GM12878 (cell line): ENCODE measurements at regions of chr10 and their contacts with region 1.

Region 1: GRCh38 chr10:110497438-110498086 is at the start of gene DUSP5:
- DNase-seq: peak; percentile 75
- ATAC-seq: peak; percentile 51
- H3K4me3 ChIP-seq: peak within 1 kb of the TSS; percentile 95
- H3K27ac ChIP-seq: peak within 1 kb of the TSS; percentile 91
- H3K4me1 ChIP-seq: peaks cover 26% of the 10 kb centered on the region
- H3K27me3 ChIP-seq: no peaks in the 10 kb centered on the region
- CTCF ChIP-seq: no peak
- EP300 ChIP-seq: peak in 1 of 2 experiments; percentile 13; a peak in 2 of 4 replicates
- POLR2A ChIP-seq: peak; percentile 90
- RAD21 ChIP-seq: no peak
- polyA plus RNA-seq, gene DUSP5: 7.5 to 14.6 TPM

Region 2: DNA sequence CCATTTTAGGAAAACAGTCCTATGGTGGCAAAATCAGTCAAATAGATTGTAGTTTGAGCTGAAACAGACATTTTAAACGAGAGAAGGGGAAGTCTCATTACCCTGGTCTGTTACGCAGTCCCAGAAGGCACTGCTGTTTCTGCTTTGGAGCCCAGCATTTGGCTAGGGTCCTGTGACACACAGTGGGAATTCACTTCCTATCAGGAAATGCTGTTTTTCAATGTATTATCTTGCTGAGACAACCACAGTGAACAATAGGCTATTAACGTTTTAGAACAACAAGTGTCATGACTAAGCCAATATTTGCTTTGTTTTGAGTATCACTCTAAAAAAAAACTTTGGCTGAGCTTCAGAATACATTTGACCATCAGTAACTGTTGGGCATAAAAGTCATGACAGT is 415.7 kb before region 1 on chr10:
- CTCF ChIA-PET with region 1: no interaction called
- POLR2A ChIA-PET with region 1: no interaction called
- RAD21 ChIA-PET with region 1: no interaction called
- SMC1A ChIA-PET with region 1: no interaction called
- in situ Hi-C with region 1: no loop called
- intact Hi-C with region 1: loop called (anchors 10 kb)
- DNase-seq: no peak
- ATAC-seq: peak; percentile 11
- H3K4me3 ChIP-seq: no peak overlapping the region
- H3K27ac ChIP-seq: peak overlapping the region; percentile 57; the same call in 1 of the 2 replicates
- H3K4me1 ChIP-seq: peaks cover 22% of the 10 kb centered on the region
- H3K27me3 ChIP-seq: no peaks in the 10 kb centered on the region
- CTCF ChIP-seq: no peak
- EP300 ChIP-seq: no peak
- POLR2A ChIP-seq: no peak
- RAD21 ChIP-seq: no peak

Region 3: GRCh38 chr10:110326351-110327032 is 171.1 kb before region 1 on chr10:
- CTCF ChIA-PET with region 1: interaction called, 7 read pairs
- POLR2A ChIA-PET with region 1: interaction called, 14 read pairs
- RAD21 ChIA-PET with region 1: interaction called, 13 read pairs
- SMC1A ChIA-PET with region 1: interaction called, 73 read pairs
- in situ Hi-C with region 1: no loop called
- intact Hi-C with region 1: no loop called
- DNase-seq: peak; percentile 51
- ATAC-seq: peak; percentile 49
- H3K4me3 ChIP-seq: no peak overlapping the region
- H3K27ac ChIP-seq: peak overlapping the region; percentile 79
- H3K4me1 ChIP-seq: peaks cover 39% of the 10 kb centered on the region
- H3K27me3 ChIP-seq: no peaks in the 10 kb centered on the region
- CTCF ChIP-seq: no peak
- EP300 ChIP-seq: peak in 1 of 2 experiments; percentile 60; a peak in 1 of 4 replicates
- POLR2A ChIP-seq: no peak
- RAD21 ChIP-seq: no peak

Region 4: GRCh38 chr10:110395725-110396651 is 101.6 kb before region 1 on chr10:
- CTCF ChIA-PET with region 1: interaction called, 3 read pairs
- POLR2A ChIA-PET with region 1: interaction called, 5 read pairs
- RAD21 ChIA-PET with region 1: interaction called, 16 read pairs
- SMC1A ChIA-PET with region 1: interaction called, 9 read pairs
- in situ Hi-C with region 1: no loop called
- intact Hi-C with region 1: no loop called
- DNase-seq: peak; percentile 91
- ATAC-seq: peak; percentile 92
- H3K4me3 ChIP-seq: no peak overlapping the region
- H3K27ac ChIP-seq: peak overlapping the region; percentile 69
- H3K4me1 ChIP-seq: peaks cover 16% of the 10 kb centered on the region
- H3K27me3 ChIP-seq: no peaks in the 10 kb centered on the region
- CTCF ChIP-seq: no peak
- EP300 ChIP-seq: peak; percentile 99 to 100
- POLR2A ChIP-seq: no peak
- RAD21 ChIP-seq: peak; percentile 24; the same call in 1 of the 2 replicates

Region 5: DNA sequence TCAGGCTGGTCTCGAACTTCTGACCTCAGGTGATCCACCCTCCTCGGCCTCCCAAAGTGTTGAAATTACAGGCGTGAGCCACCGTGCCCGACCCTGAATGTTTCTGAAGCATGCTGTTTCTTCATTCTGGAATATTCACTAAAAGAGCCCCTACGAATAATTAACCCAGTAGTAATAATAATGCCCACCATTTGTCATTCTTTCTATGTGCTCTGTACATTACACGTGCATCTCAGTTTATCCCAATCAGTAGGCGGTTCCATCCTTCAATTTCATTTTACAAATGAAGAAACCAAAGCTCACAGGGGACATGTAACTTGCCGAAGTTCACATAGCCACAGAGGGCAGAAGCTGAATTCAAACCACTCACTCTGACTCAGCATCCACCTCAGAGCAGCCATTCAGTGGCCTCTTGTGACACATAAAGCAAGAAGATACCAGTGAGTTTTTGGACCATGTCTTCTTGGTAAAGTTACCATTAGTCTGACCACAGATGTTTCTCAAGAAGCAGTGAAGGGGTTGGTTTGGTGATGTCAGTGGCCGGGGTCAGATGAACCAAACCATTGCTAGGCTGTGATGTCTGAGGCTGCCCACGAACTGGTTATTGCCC is 71.8 kb before region 1 on chr10:
- CTCF ChIA-PET with region 1: interaction called, 4 read pairs
- POLR2A ChIA-PET with region 1: interaction called, 3 read pairs
- RAD21 ChIA-PET with region 1: interaction called, 11 read pairs
- SMC1A ChIA-PET with region 1: interaction called, 13 read pairs
- in situ Hi-C with region 1: no loop called
- intact Hi-C with region 1: loop called (anchors 2 kb)
- DNase-seq: peak; percentile 89
- ATAC-seq: peak; percentile 86
- H3K4me3 ChIP-seq: no peak overlapping the region
- H3K27ac ChIP-seq: peak overlapping the region; percentile 60
- H3K4me1 ChIP-seq: peaks cover 65% of the 10 kb centered on the region
- H3K27me3 ChIP-seq: no peaks in the 10 kb centered on the region
- CTCF ChIP-seq: no peak
- EP300 ChIP-seq: peak; percentile 56 to 63; a peak in 1 of 4 replicates
- POLR2A ChIP-seq: no peak
- RAD21 ChIP-seq: peak; percentile 34; the same call in 1 of the 2 replicates

Region 6: DNA sequence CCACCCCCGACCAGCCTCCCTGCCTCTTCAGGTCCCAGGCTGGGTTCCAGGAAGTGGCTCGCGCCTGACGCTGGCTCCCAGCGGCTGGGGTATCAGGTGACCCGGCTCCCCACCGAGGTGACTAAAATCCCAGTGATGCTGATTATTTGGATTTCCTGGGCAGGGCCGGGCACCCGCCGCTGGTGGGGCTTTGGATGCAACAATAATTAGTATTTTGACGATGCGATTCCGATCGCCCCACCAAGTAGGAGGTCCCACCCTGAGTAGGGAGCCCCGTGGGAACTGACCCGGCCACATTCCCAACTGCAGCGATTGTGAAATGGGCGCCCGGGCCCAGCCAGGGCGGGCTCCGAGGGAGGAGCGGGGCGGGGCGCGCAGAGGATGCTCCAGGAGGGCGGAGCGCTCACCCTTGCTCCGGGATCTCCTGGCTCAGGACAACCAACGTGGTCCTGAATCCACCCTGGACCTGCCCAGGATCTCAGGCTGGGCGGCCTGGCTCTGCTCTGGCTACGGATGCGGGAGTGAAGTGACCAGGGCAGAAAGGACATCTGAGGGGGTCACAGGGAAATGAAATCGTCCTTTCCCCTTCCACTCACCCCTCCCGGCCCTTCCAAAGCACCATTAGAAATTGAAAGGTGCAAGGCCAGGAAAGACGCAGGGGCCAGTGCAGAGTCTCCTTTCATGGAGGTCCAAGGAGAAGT is 32.7 kb after region 1 on chr10:
- CTCF ChIA-PET with region 1: interaction called, 10 read pairs
- POLR2A ChIA-PET with region 1: interaction called, 23 read pairs
- RAD21 ChIA-PET with region 1: interaction called, 34 read pairs
- SMC1A ChIA-PET with region 1: interaction called, 44 read pairs
- in situ Hi-C with region 1: no loop called
- intact Hi-C with region 1: no loop called
- DNase-seq: no peak
- ATAC-seq: peak; percentile 35
- H3K4me3 ChIP-seq: peak overlapping the region; percentile 30; the same call in 1 of the 2 replicates
- H3K27ac ChIP-seq: 0 out of 2 replicates have a peak overlapping the region, but pooled peaks have one; percentile 18
- H3K4me1 ChIP-seq: peaks cover 36% of the 10 kb centered on the region
- H3K27me3 ChIP-seq: no peaks in the 10 kb centered on the region
- CTCF ChIP-seq: no peak
- EP300 ChIP-seq: no peak
- POLR2A ChIP-seq: no peak
- RAD21 ChIP-seq: no peak

Region 7: GRCh38 chr10:110774069-110775019 is 276.8 kb after region 1 on chr10:
- CTCF ChIA-PET with region 1: no interaction called
- POLR2A ChIA-PET with region 1: no interaction called
- RAD21 ChIA-PET with region 1: no interaction called
- SMC1A ChIA-PET with region 1: no interaction called
- in situ Hi-C with region 1: no loop called
- intact Hi-C with region 1: loop called (anchors 5 kb)
- DNase-seq: peak; percentile 99
- ATAC-seq: peak; percentile 94
- H3K4me3 ChIP-seq: no peak overlapping the region
- H3K27ac ChIP-seq: peak overlapping the region; percentile 85
- H3K4me1 ChIP-seq: peaks cover 22% of the 10 kb centered on the region
- H3K27me3 ChIP-seq: no peaks in the 10 kb centered on the region
- CTCF ChIP-seq: no peak
- EP300 ChIP-seq: peak; percentile 100
- POLR2A ChIP-seq: peak; percentile 38; the same call in 1 of the 2 replicates
- RAD21 ChIP-seq: no peak

Region 8: GRCh38 chr10:111186358-111186757 is 688.8 kb after region 1 on chr10:
- CTCF ChIA-PET with region 1: no interaction called
- POLR2A ChIA-PET with region 1: no interaction called
- RAD21 ChIA-PET with region 1: no interaction called
- SMC1A ChIA-PET with region 1: no interaction called
- in situ Hi-C with region 1: no loop called
- intact Hi-C with region 1: no loop called
- DNase-seq: no peak
- ATAC-seq: no peak
- H3K4me3 ChIP-seq: no peak overlapping the region
- H3K27ac ChIP-seq: no peak overlapping the region
- H3K4me1 ChIP-seq: no peaks in the 10 kb centered on the region
- H3K27me3 ChIP-seq: no peaks in the 10 kb centered on the region
- CTCF ChIP-seq: no peak
- EP300 ChIP-seq: no peak
- POLR2A ChIP-seq: no peak
- RAD21 ChIP-seq: no peak

Region 9: GRCh38 chr10:111323389-111323966 is 825.9 kb after region 1 on chr10:
- CTCF ChIA-PET with region 1: no interaction called
- POLR2A ChIA-PET with region 1: no interaction called
- RAD21 ChIA-PET with region 1: no interaction called
- SMC1A ChIA-PET with region 1: no interaction called
- in situ Hi-C with region 1: no loop called
- intact Hi-C with region 1: no loop called
- DNase-seq: no peak
- ATAC-seq: no peak
- H3K4me3 ChIP-seq: no peak overlapping the region
- H3K27ac ChIP-seq: no peak overlapping the region
- H3K4me1 ChIP-seq: no peaks in the 10 kb centered on the region
- H3K27me3 ChIP-seq: no peaks in the 10 kb centered on the region
- CTCF ChIP-seq: peak in 2 of 3 experiments; percentile 1 to 9; a peak in 1 of 6 replicates
- EP300 ChIP-seq: no peak
- POLR2A ChIP-seq: no peak
- RAD21 ChIP-seq: peak; percentile 31; the same call in 1 of the 2 replicates